Prostate gland (tissue), 2 donors: ENCODE measurements at regions of chr11 and their contacts with region 1.

Region 1: GRCh38 chr11:9757809-9758636 is 94.1 kb downstream of the SWAP70 start:
- DNase-seq: peak; percentile 78
- H3K4me3 ChIP-seq: peak overlapping the region; percentile 54 to 58
- H3K27ac ChIP-seq: peak overlapping the region; percentile 84
- H3K4me1 ChIP-seq: peaks cover 15% of the 10 kb centered on the region
- H3K27me3 ChIP-seq: no peaks in the 10 kb centered on the region
- CTCF ChIP-seq: peak; percentile 90 to 98 (median 98)
- POLR2A ChIP-seq: peak; percentile 44

Region 2: DNA sequence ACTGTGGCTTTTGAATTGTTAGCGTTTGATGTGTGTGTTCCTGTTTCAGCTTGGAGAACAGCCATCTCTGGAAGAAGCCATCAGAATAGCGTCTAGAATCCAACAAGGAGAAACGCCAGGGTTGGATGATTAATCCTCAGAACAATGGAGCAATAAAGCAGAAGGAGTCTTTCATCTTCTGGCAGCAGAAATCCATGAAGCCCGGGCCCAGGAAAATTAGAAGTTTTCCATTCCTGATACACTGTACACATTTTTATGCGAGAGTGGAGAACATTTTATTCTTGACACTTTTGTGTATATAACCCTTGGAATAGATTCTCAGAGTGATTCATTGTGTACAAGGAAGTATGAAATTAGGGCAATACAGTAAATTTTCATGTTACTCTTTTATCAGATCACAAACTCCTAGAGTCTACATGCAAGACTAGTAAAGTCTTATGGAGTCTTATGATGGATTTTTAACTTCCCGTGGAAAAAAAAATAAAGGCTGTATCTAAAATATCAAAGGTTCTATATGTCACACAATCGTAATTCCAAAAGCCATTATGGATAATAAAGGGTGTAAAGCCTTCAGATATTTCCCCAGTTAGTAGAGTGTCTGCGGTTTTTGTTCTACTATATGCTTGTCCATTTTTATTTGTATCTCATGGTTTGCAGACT is 230.4 kb before region 1 on chr11:
- intact Hi-C with region 1: no loop called
- DNase-seq: peak; percentile 71
- H3K4me3 ChIP-seq: no peak overlapping the region
- H3K27ac ChIP-seq: peak overlapping the region; percentile 70 to 72
- H3K4me1 ChIP-seq: peaks cover 28% of the 10 kb centered on the region
- H3K27me3 ChIP-seq: no peaks in the 10 kb centered on the region
- CTCF ChIP-seq: no peak
- POLR2A ChIP-seq: no peak

Region 3: GRCh38 chr11:9716275-9717039 is 41.6 kb before region 1 on chr11:
- intact Hi-C with region 1: no loop called
- DNase-seq: no peak
- H3K4me3 ChIP-seq: no peak overlapping the region
- H3K27ac ChIP-seq: no peak overlapping the region
- H3K4me1 ChIP-seq: no peaks in the 10 kb centered on the region
- H3K27me3 ChIP-seq: no peaks in the 10 kb centered on the region
- CTCF ChIP-seq: no peak
- POLR2A ChIP-seq: no peak

Region 4: GRCh38 chr11:9802291-9802861 is 44.4 kb after region 1 on chr11:
- intact Hi-C with region 1: loop called (anchors 5 kb)
- DNase-seq: peak; percentile 8
- H3K4me3 ChIP-seq: no peak overlapping the region
- H3K27ac ChIP-seq: peak overlapping the region; percentile 35 to 40
- H3K4me1 ChIP-seq: no peaks in the 10 kb centered on the region
- H3K27me3 ChIP-seq: no peaks in the 10 kb centered on the region
- CTCF ChIP-seq: no peak
- POLR2A ChIP-seq: no peak

Region 5: GRCh38 chr11:9838961-9839360 is 80.9 kb after region 1 on chr11:
- intact Hi-C with region 1: no loop called
- DNase-seq: peak; percentile 30
- H3K4me3 ChIP-seq: no peak overlapping the region
- H3K27ac ChIP-seq: peak overlapping the region; percentile 51 to 77
- H3K4me1 ChIP-seq: no peaks in the 10 kb centered on the region
- H3K27me3 ChIP-seq: no peaks in the 10 kb centered on the region
- CTCF ChIP-seq: no peak
- POLR2A ChIP-seq: no peak

Region 6: DNA sequence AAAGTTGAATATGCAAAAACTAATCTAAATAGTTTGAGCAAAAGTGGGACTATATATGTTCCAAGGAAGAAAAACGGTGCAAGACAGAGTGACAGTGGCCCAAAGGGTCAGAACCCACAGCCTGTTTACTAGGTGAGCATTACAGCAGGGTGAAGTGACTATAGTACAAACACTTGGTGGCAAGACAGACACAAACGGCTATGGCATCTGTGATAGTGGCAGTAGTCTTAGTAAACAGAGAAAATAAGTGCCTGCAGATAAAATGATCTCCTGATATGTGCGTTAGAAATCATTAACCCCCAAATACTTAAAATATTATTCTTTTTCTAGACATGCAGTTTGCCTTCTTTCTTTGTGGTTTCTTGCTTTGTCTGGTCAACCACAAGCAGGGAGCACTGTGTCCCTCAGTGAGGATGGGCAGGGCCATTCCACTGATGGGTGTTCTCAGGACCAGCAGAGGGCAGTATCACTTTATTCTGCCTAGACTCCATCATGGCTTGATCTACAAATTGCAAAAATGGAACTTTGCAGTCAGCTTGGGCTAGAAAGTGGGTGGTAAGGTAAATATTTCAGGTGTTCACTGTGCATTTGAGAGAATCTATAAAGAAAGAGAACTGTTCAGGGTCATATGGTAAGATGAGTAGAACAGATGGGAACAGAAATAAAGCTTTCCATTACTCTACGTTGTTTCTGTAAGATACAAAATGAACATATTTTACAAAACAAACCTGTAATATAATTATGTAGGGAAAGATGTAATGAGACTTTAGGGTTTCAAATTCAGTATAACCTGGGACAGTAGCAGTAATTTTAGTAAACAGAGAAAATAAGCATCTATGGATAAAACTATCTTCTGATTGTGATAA is 104.1 kb after region 1 on chr11:
- intact Hi-C with region 1: loop called (anchors 5 kb)
- DNase-seq: peak; percentile 34
- H3K4me3 ChIP-seq: no peak overlapping the region
- H3K27ac ChIP-seq: no peak overlapping the region
- H3K4me1 ChIP-seq: peaks cover 4% of the 10 kb centered on the region
- H3K27me3 ChIP-seq: no peaks in the 10 kb centered on the region
- CTCF ChIP-seq: peak in 3 of 4 experiments; percentile 42 to 55 (median 51)
- POLR2A ChIP-seq: no peak

Region 7: GRCh38 chr11:9972989-9973388 is 215.0 kb after region 1 on chr11:
- intact Hi-C with region 1: loop called (anchors 1 kb)
- DNase-seq: peak; percentile 38
- H3K4me3 ChIP-seq: no peak overlapping the region
- H3K27ac ChIP-seq: no peak overlapping the region
- H3K4me1 ChIP-seq: no peaks in the 10 kb centered on the region
- H3K27me3 ChIP-seq: no peaks in the 10 kb centered on the region
- CTCF ChIP-seq: peak; percentile 23 to 86 (median 68)
- POLR2A ChIP-seq: no peak

Region 8: GRCh38 chr11:10307442-10308207 is 549.6 kb after region 1 on chr11:
- intact Hi-C with region 1: loop called (anchors 1 kb)
- DNase-seq: peak; percentile 75
- H3K4me3 ChIP-seq: peak overlapping the region; percentile 54 to 58
- H3K27ac ChIP-seq: peak overlapping the region; percentile 95 to 96
- H3K4me1 ChIP-seq: peaks cover 8% of the 10 kb centered on the region
- H3K27me3 ChIP-seq: no peaks in the 10 kb centered on the region
- CTCF ChIP-seq: peak; percentile 97 to 99 (median 98)
- POLR2A ChIP-seq: peak; percentile 50

Region 9: DNA sequence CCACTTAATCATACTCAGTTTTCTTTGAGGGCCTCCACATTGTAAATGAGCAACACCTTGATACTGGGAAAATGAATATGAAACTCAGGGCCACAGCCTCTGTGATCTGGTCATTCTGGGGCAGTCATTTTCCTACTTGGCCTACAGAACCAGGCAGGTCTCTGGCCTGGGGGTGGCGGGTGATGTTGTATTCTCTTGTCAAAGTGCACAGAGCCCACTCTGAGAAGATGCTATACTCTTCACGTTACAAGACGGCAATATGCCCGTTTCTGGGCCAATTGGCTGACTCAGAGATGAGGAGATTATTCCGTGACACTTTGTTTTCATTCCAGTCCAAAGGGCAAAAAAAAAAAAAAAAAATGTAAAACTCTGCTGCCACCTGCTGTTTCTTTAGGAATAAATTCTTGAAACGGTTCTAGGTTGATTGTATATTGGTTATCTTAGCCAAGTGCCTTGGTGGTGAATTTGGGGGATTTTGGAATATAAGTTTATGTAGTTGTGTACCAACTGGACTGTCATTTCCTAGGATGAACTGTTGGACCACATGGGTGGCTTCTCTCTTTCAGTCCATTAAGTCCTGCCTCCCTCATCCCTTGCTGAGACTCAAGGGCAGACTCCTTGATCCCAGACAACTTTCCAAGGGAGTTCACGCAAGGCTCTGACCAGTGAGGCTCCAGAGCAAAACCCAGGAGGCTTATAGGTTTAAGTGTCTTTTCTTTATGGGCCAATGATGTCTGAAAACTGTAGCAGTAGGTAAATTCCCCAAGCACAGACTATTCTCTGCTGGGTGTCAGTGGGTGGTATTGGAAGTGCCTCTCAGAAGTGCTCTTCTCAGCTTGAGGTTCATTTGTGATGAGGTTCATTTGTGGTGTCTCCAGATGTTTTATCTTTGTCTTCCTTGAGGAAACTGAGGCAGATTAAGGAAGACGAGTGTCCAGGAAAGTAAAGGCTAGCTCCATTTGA is 565.1 kb after region 1 on chr11:
- intact Hi-C with region 1: loop called (anchors 5 kb)
- DNase-seq: peak; percentile 46
- H3K4me3 ChIP-seq: no peak overlapping the region
- H3K27ac ChIP-seq: peak overlapping the region; percentile 15 to 37
- H3K4me1 ChIP-seq: no peaks in the 10 kb centered on the region
- H3K27me3 ChIP-seq: no peaks in the 10 kb centered on the region
- CTCF ChIP-seq: peak; percentile 24 to 79 (median 64)
- POLR2A ChIP-seq: no peak

Region 10: GRCh38 chr11:10366568-10367370 is 608.7 kb after region 1 on chr11:
- intact Hi-C with region 1: loop called (anchors 5 kb)
- DNase-seq: peak; percentile 44
- H3K4me3 ChIP-seq: no peak overlapping the region
- H3K27ac ChIP-seq: no peak overlapping the region
- H3K4me1 ChIP-seq: no peaks in the 10 kb centered on the region
- H3K27me3 ChIP-seq: no peaks in the 10 kb centered on the region
- CTCF ChIP-seq: peak; percentile 37 to 80 (median 54)
- POLR2A ChIP-seq: no peak